Activated CD4-positive, alpha-beta memory T cell treated with anti-CD3 and anti-CD28 coated beads for 36 hours (primary cell): ENCODE measurements at regions of chr3 and their contacts with region 1.

Region 1: DNA sequence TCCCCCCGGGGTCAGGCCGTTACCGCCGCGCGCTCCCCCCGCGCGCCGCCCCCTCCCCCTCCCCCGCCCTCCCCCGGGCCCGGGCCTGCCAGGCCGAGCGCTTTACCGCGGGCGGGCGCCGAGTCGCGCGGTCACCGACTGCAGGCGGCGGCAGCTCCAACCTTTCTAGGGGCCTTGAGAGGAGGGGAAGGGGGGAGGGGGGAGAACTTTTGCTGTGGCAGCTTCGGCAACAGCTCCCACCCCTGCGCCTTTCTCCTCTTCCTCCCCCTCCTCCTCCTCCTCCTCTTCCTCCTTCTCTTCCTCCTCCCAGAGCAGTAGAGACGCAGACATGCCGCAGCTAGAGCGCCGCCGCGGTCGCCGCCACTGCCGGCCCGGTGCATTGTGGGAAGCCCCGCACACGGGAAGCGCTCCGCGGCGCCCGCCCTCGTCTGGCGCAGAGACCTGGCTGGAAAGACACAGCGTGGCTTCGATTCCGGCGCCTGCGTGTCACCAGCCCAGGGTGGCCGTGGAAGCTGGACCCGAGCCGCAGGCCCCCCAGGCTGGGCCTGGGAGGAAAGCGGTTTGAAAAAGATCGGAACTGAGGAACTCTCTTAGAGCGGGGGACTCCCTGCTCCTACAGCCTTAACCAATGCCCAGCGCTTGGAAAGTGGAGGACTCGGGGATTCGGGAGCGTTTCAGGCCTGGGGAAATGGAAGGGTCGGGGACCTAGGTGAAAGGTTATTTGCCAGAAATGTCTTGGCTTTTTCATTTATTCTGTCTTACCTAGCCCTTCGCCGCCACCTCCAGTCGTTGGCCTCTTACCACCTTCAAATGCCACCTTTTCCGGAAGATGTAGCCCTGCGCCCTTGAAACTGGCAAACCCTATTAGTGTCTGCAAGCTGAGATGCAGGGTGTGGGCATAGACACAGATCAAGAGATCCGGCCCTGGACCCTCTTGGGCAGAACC is at the start of gene ZNF148:
- DNase-seq: peak; percentile 93
- H3K4me3 Mint-ChIP-seq: peak within 1 kb of the TSS; percentile 98
- H3K27ac Mint-ChIP-seq: peak within 1 kb of the TSS; percentile 94
- H3K4me1 Mint-ChIP-seq: peaks cover 36% of the 10 kb centered on the region
- H3K27me3 Mint-ChIP-seq: no peaks in the 10 kb centered on the region
- total RNA-seq, gene ZNF148: 27.9 to 29.9 TPM

Region 2: DNA sequence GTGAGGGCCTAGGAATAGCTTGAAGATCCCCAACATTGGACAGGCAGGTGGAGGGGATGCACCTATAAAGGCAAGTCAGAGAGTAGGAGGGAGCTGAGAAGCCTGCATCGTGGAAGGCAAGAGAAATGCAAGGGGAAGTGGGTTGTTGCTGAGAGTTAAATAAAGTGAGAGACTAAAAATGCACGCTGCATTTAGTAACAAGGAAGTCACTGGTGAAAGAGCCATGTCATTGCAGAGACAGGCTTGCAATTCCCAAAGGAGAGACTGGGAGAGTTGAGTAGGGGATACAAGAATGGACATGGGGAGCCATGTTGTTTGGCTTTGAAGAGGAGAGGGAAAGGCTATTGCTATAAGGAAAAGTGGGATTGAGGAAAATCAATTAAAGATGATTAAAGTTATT is 242.5 kb before region 1 on chr3:
- CTCF ChIA-PET with region 1: no interaction called
- POLR2A ChIA-PET with region 1: no interaction called
- intact Hi-C with region 1: no loop called
- DNase-seq: no peak
- H3K4me3 Mint-ChIP-seq: no peak overlapping the region
- H3K27ac Mint-ChIP-seq: no peak overlapping the region
- H3K4me1 Mint-ChIP-seq: peaks cover 10% of the 10 kb centered on the region
- H3K27me3 Mint-ChIP-seq: peaks cover 17% of the 10 kb centered on the region

Region 3: GRCh38 chr3:125310623-125311081 is 64.6 kb before region 1 on chr3:
- CTCF ChIA-PET with region 1: interaction called, 3 read pairs
- POLR2A ChIA-PET with region 1: no interaction called
- intact Hi-C with region 1: loop called (anchors 2 kb)
- DNase-seq: peak; percentile 72
- H3K4me3 Mint-ChIP-seq: peak overlapping the region; percentile 84
- H3K27ac Mint-ChIP-seq: peak overlapping the region; percentile 81
- H3K4me1 Mint-ChIP-seq: peaks cover 45% of the 10 kb centered on the region
- H3K27me3 Mint-ChIP-seq: no peaks in the 10 kb centered on the region

Region 4: DNA sequence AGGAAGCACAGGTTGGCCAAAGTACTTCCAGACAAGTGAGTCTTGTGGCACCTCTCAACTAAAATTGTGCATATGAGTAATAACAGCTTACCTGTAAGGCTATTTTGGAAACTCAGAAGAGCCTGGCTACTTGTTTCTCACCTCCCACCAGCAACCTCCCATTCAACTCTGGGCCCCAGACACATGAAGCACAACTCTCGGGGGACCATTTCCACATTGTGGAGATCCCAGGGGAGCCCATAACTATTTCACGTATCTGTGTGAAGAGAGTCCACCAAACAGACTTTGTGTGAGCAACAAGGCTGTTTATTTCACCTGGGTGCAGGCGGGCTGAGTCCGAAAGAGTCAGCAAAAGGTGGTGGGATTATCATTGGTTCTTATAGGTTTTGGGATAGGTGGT is 149.9 kb after region 1 on chr3:
- CTCF ChIA-PET with region 1: no interaction called
- POLR2A ChIA-PET with region 1: no interaction called
- intact Hi-C with region 1: no loop called
- DNase-seq: no peak
- H3K4me3 Mint-ChIP-seq: no peak overlapping the region
- H3K27ac Mint-ChIP-seq: no peak overlapping the region
- H3K4me1 Mint-ChIP-seq: peaks cover 3% of the 10 kb centered on the region
- H3K27me3 Mint-ChIP-seq: no peaks in the 10 kb centered on the region

Region 5: DNA sequence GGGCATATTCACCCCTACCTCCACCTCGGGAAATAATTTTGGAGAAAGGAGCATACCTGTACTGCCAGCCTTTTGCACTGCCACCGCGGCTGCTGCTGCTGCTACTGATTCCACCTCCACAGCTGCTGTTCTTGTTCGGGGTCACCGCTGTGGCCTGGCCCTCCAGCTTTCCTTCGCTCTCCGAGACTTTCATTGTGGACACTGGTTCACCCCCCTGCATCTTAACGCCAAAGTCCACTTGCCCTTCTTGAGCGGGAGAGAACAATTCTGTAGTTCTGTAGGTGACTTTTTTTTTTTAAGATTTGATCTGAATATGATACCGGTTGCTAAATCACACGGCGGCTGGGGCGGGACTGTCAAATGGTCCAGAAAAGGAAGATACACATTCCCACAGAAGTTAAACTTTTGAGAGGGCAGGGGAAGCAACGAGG is 219.3 kb after region 1 on chr3:
- CTCF ChIA-PET with region 1: no interaction called
- POLR2A ChIA-PET with region 1: no interaction called
- intact Hi-C with region 1: loop called (anchors 10 kb)
- DNase-seq: peak; percentile 23
- H3K4me3 Mint-ChIP-seq: peak overlapping the region; percentile 91
- H3K27ac Mint-ChIP-seq: peak overlapping the region; percentile 62
- H3K4me1 Mint-ChIP-seq: peaks cover 33% of the 10 kb centered on the region
- H3K27me3 Mint-ChIP-seq: no peaks in the 10 kb centered on the region

Region 6: DNA sequence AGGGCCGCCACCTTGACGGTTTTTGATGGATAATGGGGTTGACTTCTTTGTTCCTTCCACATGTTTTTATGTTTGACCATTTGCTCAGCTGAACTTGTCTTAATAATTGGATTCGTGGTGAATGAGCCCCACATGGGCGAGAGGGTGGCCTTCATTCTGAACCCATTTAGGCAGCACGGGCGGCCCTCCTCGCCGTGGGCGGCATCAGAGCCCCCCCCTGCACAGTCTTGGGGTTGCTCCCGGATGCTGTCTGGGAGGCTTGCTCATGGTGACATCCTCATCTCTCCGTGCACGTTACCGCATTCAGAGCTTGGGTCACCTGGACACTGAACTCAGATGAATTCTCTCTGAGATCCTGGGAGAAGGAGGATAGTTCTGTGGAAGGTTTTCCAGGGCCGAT is 392.4 kb after region 1 on chr3:
- CTCF ChIA-PET with region 1: no interaction called
- POLR2A ChIA-PET with region 1: no interaction called
- intact Hi-C with region 1: no loop called
- DNase-seq: no peak
- H3K4me3 Mint-ChIP-seq: no peak overlapping the region
- H3K27ac Mint-ChIP-seq: no peak overlapping the region
- H3K4me1 Mint-ChIP-seq: peaks cover 7% of the 10 kb centered on the region
- H3K27me3 Mint-ChIP-seq: peaks cover 16% of the 10 kb centered on the region